ENCODE measurements at regions of chr9 and their contacts with region 1.

Region 1: DNA sequence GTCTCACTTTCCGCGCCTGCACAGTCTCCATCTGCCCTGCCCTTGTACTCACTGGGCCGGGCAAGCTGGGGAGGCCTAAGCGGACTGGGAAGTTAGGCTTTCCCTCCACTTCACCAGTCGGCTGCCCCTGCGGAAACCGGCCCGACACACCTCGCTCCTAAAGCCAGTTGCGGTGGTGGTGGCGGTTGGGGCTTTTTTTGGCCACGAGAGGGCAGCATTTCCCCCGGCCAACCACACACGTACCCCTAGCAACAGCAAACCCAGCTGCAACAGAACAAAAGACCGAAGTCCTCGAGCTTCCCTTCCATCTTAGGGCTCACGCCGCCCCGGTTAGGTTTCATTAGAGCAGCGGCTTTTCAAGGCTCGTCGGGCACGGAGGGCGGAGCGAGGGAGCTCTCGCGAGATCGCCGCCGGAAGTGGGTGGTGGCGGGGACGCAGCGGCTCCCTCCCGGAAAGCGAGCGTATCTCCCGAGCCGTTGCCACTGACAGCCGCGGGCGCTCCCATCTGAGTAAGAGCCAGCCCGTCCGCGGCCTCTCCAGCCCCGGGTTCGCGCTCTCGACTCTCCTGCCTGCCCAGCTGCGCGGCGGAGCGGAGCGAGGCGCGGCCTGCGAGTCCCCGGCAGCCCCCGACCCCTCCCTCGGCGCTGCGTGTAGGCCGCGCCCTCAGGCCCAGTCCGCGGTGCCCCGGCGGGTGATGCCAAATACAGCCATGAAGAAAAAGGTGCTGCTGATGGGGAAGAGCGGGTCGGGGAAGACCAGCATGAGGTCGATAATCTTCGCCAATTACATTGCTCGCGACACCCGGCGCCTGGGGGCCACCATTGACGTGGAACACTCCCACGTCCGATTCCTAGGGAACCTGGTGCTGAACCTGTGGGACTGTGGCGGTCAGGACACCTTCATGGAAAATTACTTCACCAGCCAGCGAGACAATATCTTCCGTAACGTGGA is at the start of gene RRAGA:
- DNase-seq: peak; percentile 98
- ATAC-seq: peak; percentile 90
- H3K4me3 Mint-ChIP-seq: peak within 1 kb of the TSS; percentile 91
- H3K27ac Mint-ChIP-seq: peak within 1 kb of the TSS; percentile 97
- H3K4me1 Mint-ChIP-seq: peaks cover 46% of the 10 kb centered on the region
- H3K27me3 Mint-ChIP-seq: no peaks in the 10 kb centered on the region
- CTCF ChIP-seq: no peak
- total RNA-seq, gene RRAGA: 44.6 and 45.0 TPM in 2 replicates

Region 2: GRCh38 chr9:19127881-19128500 is 78.8 kb after region 1 on chr9:
- CTCF ChIA-PET with region 1: interaction called, 4 read pairs
- POLR2A ChIA-PET with region 1: interaction called, 6 read pairs
- intact Hi-C with region 1: loop called (anchors 1 kb)
- DNase-seq: peak; percentile 18
- ATAC-seq: peak; percentile 12
- H3K4me3 Mint-ChIP-seq: peak overlapping the region; percentile 89
- H3K27ac Mint-ChIP-seq: peak overlapping the region; percentile 79
- H3K4me1 Mint-ChIP-seq: peaks cover 29% of the 10 kb centered on the region
- H3K27me3 Mint-ChIP-seq: no peaks in the 10 kb centered on the region
- CTCF ChIP-seq: no peak

Region 3: GRCh38 chr9:19408693-19409400 is 359.6 kb after region 1 on chr9 and contains the start of gene ACER2:
- CTCF ChIA-PET with region 1: no interaction called
- POLR2A ChIA-PET with region 1: no interaction called
- intact Hi-C with region 1: loop called (anchors 1 kb)
- DNase-seq: peak; percentile 99
- ATAC-seq: peak; percentile 97
- H3K4me3 Mint-ChIP-seq: peak within 1 kb of the TSS; percentile 94
- H3K27ac Mint-ChIP-seq: peak within 1 kb of the TSS; percentile 69
- H3K4me1 Mint-ChIP-seq: peaks cover 12% of the 10 kb centered on the region
- H3K27me3 Mint-ChIP-seq: no peaks in the 10 kb centered on the region
- CTCF ChIP-seq: no peak
- total RNA-seq, gene ACER2: 1.4 and 2.0 TPM in 2 replicates

Region 4: DNA sequence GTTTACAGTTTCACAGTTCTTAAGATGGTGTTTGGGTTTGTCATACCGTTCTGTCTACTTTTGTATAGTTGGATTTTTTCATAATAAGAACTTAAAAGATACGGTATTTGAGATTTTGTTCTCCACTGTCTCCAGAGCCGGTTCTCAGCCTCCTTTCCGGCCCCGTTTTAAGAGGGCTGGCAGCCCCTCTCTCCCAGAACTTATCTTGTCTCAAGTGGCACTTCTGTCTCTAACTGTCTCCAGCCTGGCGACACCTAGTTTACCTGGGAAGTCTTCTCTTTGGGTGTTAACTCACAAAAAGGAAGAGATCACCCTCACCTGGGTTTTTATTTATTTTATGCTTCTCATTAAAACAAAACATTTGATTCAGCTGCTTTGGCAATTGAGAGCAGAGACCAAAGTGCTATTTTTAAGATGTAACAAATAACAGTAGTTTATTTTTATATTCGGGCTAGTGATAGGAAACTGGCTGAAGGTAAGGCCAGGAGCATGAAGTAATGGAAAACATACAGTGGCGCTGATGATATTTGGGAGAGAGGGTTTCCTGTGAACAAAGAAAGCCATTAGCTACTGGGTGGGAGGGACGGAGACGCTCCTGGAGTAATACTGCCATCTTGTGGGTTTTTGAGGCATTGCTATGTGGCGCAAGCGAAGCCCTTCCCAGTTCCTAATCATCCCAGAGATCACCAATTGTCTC is 407.9 kb after region 1 on chr9:
- CTCF ChIA-PET with region 1: interaction called, 26 read pairs
- POLR2A ChIA-PET with region 1: interaction called, 12 read pairs
- intact Hi-C with region 1: loop called (anchors 1 kb)
- DNase-seq: peak; percentile 32
- ATAC-seq: peak; percentile 97
- H3K4me3 Mint-ChIP-seq: no peak overlapping the region
- H3K27ac Mint-ChIP-seq: no peak overlapping the region
- H3K4me1 Mint-ChIP-seq: peaks cover 13% of the 10 kb centered on the region
- H3K27me3 Mint-ChIP-seq: no peaks in the 10 kb centered on the region
- CTCF ChIP-seq: peak; percentile 80

Region 5: GRCh38 chr9:20684035-20684872 is 1635.0 kb after region 1 on chr9 and contains the start of gene FOCAD:
- CTCF ChIA-PET with region 1: no interaction called
- POLR2A ChIA-PET with region 1: interaction called, 4 read pairs
- intact Hi-C with region 1: loop called (anchors 2 kb)
- DNase-seq: peak; percentile 95
- ATAC-seq: peak; percentile 99
- H3K4me3 Mint-ChIP-seq: peak within 1 kb of the TSS; percentile 91
- H3K27ac Mint-ChIP-seq: peak within 1 kb of the TSS; percentile 66
- H3K4me1 Mint-ChIP-seq: peaks cover 15% of the 10 kb centered on the region
- H3K27me3 Mint-ChIP-seq: no peaks in the 10 kb centered on the region
- CTCF ChIP-seq: no peak
- total RNA-seq, gene FOCAD: 11.7 and 11.9 TPM in 2 replicates

Measured in activated B cell treated with CpG ODN at 0.5 μM for 24 hours (primary cell).